Adrenal gland (tissue), 19 donors: ENCODE measurements at regions of chrX and their contacts with region 1.

Region 1: GRCh38 chrX:103464774-103465117 is 54.5 kb downstream of the RAB40A start:
- DNase-seq: peak; percentile 56 to 90 (median 78)
- H3K4me3 ChIP-seq: peak overlapping the region in 1 of 4 donors; percentile 51
- H3K27ac ChIP-seq: no peak overlapping the region
- H3K4me1 ChIP-seq: no peaks in the 10 kb centered on the region
- H3K27me3 ChIP-seq: no peaks in the 10 kb centered on the region
- CTCF ChIP-seq: peak; percentile 47 to 81 (median 70)
- POLR2A ChIP-seq: no peak

Region 2: GRCh38 chrX:103214870-103215424 is 249.8 kb before region 1 on chrX and contains the start of gene BEX4:
- intact Hi-C with region 1: loop called in 1 of 2 experiments (anchors 10 kb)
- DNase-seq: peak; percentile 83 to 93 (median 89)
- H3K4me3 ChIP-seq: peak within 1 kb of the TSS in 2 of 4 donors; percentile 59 to 72
- H3K27ac ChIP-seq: peak within 1 kb of the TSS in 4 of 5 donors; percentile 54 to 89 (median 87)
- H3K4me1 ChIP-seq: no peaks in the 10 kb centered on the region
- H3K27me3 ChIP-seq: peaks cover 12% of the 10 kb centered on the region
- CTCF ChIP-seq: no peak
- POLR2A ChIP-seq: peak; percentile 91 to 93
- total RNA-seq, gene BEX4: 24.5 to 150 (median 62.3) TPM

Region 3: GRCh38 chrX:103343105-103343504 is 121.6 kb before region 1 on chrX:
- intact Hi-C with region 1: loop called (anchors 10 kb)
- DNase-seq: peak in 6 of 7 donors; percentile 34 to 81 (median 54)
- H3K4me3 ChIP-seq: no peak overlapping the region
- H3K27ac ChIP-seq: no peak overlapping the region
- H3K4me1 ChIP-seq: no peaks in the 10 kb centered on the region
- H3K27me3 ChIP-seq: peaks cover 28% of the 10 kb centered on the region
- CTCF ChIP-seq: peak; percentile 33 to 70 (median 64)
- POLR2A ChIP-seq: no peak

Region 4: GRCh38 chrX:103376118-103376978 is 88.4 kb before region 1 on chrX and contains the start of gene BEX3:
- intact Hi-C with region 1: no loop called
- DNase-seq: peak; percentile 64 to 82 (median 73)
- H3K4me3 ChIP-seq: peak within 1 kb of the TSS in 3 of 4 donors; percentile 40 to 58 (median 40)
- H3K27ac ChIP-seq: peak within 1 kb of the TSS in 4 of 5 donors; percentile 66 to 91 (median 83)
- H3K4me1 ChIP-seq: no peaks in the 10 kb centered on the region
- H3K27me3 ChIP-seq: no peaks in the 10 kb centered on the region
- CTCF ChIP-seq: no peak
- POLR2A ChIP-seq: peak; percentile 69 to 87
- total RNA-seq, gene BEX3: 259 to 1,002 (median 370) TPM

Region 5: GRCh38 chrX:103722505-103722904 is 257.8 kb after region 1 on chrX:
- intact Hi-C with region 1: no loop called
- DNase-seq: no peak
- H3K4me3 ChIP-seq: no peak overlapping the region
- H3K27ac ChIP-seq: no peak overlapping the region
- H3K4me1 ChIP-seq: no peaks in the 10 kb centered on the region
- H3K27me3 ChIP-seq: peaks cover 12% of the 10 kb centered on the region
- CTCF ChIP-seq: no peak
- POLR2A ChIP-seq: no peak